WTC11 (cell line): ENCODE measurements at regions of chr10 and their contacts with region 1.

Region 1: GRCh38 chr10:102596506-102596971 is 47.7 kb upstream of the TRIM8 start:
- DNase-seq: peak; percentile 72
- ATAC-seq: peak; percentile 90
- H3K4me3 Mint-ChIP-seq: no peak overlapping the region
- H3K27ac Mint-ChIP-seq: peak overlapping the region; percentile 28; the same call in 1 of the 2 replicates
- H3K4me1 Mint-ChIP-seq: peaks cover 16% of the 10 kb centered on the region
- H3K27me3 Mint-ChIP-seq: no peaks in the 10 kb centered on the region
- CTCF ChIP-seq: peak; percentile 60

Region 2: DNA sequence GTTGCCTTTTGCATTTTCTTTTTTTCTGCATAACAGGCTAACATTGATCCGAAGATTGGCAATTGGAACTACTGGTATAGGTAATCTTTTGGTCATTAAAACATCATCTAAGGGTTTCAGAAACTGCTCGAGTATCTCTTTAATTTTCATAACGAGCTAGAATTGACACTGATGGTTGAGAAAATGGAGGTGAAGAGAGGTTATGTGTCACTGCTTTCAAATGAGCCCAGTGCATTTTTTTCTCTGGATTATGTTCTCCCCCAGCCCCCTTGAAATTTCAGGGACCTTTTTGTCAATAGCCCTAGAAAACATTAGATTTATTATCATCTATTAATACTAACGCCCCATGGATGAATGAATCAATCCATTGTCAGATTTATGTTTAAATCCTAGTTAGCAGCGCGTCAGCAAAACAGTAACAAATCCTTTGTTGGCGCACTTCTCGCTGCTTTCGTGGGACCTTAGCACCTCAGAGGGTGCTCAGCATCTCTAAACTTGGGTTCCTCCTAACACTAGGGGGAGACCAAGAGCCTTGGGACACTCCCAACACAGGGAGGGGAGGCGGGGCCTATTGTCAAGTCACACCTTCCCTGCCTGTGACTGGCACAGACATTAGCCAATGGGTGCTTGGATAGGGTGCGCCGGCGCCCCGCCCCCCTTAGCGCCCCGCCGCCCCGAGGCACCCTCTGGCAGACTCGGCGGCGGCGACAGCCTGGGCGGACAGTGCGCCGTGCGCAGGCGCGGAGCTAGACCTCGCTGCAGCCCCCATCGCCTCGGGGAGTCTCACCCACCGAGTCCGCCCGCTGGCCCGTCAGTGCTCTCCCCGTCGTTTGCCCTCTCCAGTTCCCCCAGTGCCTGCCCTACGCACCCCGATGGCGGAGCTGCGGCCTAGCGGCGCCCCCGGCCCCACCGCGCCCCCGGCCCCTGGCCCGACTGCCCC is 93.0 kb before region 1 on chr10 and contains the start of gene SUFU:
- CTCF ChIA-PET with region 1: interaction called, 23 read pairs
- POLR2A ChIA-PET with region 1: no interaction called
- DNase-seq: peak; percentile 98
- ATAC-seq: peak; percentile 74
- H3K4me3 Mint-ChIP-seq: peak within 1 kb of the TSS; percentile 95
- H3K27ac Mint-ChIP-seq: peak within 1 kb of the TSS; percentile 41; the same call in 1 of the 2 replicates
- H3K4me1 Mint-ChIP-seq: peaks cover 8% of the 10 kb centered on the region; the same call in 1 of the 2 replicates
- H3K27me3 Mint-ChIP-seq: peaks cover 12% of the 10 kb centered on the region
- CTCF ChIP-seq: peak; percentile 70
- total RNA-seq, gene SUFU: 11.6 to 13.1 TPM (median 12.8 TPM) in 3 replicates

Region 3: DNA sequence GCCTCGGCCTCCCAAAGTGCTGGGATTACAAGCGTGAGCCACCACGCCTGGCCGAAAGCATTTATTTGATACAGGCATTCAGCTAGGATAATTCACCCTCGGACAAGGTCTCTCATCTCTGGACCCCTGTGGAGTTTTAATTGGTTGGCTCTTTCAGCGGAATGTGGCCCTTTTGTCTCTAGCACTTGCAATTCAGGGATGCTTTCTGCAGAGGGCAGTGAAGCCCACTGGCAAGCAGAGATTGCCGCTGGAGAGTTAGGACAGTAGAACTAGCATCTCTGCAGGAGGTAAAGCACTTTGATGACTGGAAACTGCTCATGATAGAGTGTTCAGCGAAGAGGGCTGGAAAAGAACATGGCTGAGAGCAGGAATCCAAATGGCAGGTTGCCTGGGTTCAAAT is 30.7 kb before region 1 on chr10:
- CTCF ChIA-PET with region 1: interaction called, 12 read pairs
- POLR2A ChIA-PET with region 1: no interaction called
- DNase-seq: peak; percentile 79
- ATAC-seq: peak; percentile 94
- H3K4me3 Mint-ChIP-seq: no peak overlapping the region
- H3K27ac Mint-ChIP-seq: no peak overlapping the region
- H3K4me1 Mint-ChIP-seq: peaks cover 4% of the 10 kb centered on the region
- H3K27me3 Mint-ChIP-seq: peaks cover 94% of the 10 kb centered on the region
- CTCF ChIP-seq: 0 out of 2 replicates have a peak, but pooled peaks have one; percentile 12

Region 4: DNA sequence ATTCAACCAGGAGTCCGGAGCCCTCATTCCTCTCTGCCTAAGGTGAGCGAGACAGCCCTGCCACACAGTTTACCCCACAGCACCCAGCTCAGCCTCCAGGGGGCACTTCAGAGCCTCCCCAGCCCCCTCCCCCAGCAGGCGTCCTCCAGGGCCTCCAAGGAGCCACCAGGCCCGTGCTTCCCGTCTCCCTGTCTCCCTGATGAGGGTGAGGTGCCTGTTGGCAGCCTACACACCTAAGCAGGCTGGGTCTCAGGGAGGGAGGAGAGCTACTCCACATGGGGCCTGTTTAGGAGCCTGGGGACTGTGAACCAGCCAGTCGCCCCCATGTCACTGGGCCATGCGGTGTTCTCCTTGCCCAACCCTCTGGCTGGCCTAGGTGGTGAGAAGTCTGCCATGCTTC is 18.8 kb after region 1 on chr10:
- CTCF ChIA-PET with region 1: interaction called, 16 read pairs
- POLR2A ChIA-PET with region 1: no interaction called
- DNase-seq: peak; percentile 77
- ATAC-seq: peak; percentile 86
- H3K4me3 Mint-ChIP-seq: no peak overlapping the region
- H3K27ac Mint-ChIP-seq: no peak overlapping the region
- H3K4me1 Mint-ChIP-seq: peaks cover 8% of the 10 kb centered on the region
- H3K27me3 Mint-ChIP-seq: no peaks in the 10 kb centered on the region
- CTCF ChIP-seq: peak; percentile 43

Region 5: GRCh38 chr10:102629661-102630614 is 33.4 kb after region 1 on chr10:
- CTCF ChIA-PET with region 1: interaction called, 13 read pairs
- POLR2A ChIA-PET with region 1: no interaction called
- DNase-seq: peak; percentile 67
- ATAC-seq: peak; percentile 74
- H3K4me3 Mint-ChIP-seq: no peak overlapping the region; the same call in 1 of the 2 replicates
- H3K27ac Mint-ChIP-seq: peak overlapping the region; percentile 90
- H3K4me1 Mint-ChIP-seq: peaks cover 85% of the 10 kb centered on the region
- H3K27me3 Mint-ChIP-seq: no peaks in the 10 kb centered on the region; the same call in 1 of the 2 replicates
- CTCF ChIP-seq: no peak

Region 6: DNA sequence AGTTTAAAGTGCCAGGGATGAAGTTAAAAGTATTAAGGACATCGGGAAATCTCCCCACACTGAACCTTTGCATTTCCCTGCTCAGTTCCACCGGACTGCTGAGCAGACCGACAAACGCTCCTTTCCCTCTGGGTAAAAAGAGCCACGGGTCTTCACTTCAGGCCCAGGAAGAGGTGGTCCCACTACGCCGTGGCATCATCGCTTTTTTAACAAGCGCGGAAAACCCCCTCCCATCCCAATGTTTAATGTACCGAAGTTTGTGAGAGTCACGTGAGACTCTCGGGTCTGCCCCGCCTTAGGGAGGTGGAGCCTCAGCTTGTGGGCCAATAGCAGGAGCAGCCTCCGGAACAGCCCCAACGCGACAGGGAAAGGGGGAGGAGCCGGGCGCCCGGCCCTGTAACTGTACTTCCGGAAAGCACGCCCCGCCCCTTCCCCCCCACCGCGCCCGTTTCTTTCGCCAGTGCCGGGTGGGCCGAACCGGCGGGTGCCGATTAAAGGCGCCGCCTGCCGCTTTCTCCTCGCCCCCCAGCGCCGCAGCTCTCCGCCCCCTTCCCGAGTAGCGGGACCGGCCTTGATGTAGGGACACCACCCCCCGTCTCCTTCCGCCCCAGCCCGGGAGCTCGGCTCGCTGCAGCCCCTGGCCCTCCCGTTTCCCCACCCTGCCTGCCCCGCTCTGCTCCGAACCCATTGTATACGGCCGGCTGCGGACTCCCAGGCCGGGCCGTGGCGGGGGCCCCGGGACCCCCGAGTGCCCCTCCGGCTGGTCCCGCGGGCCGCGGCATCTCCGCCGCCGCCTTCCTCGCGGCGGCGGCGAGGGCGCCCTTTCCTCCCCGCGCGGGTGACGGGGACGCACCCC is 45.6 kb after region 1 on chr10:
- CTCF ChIA-PET with region 1: interaction called, 11 read pairs
- POLR2A ChIA-PET with region 1: no interaction called
- DNase-seq: peak; percentile 99
- ATAC-seq: peak; percentile 86
- H3K4me3 Mint-ChIP-seq: peak overlapping the region; percentile 85
- H3K27ac Mint-ChIP-seq: peak overlapping the region; percentile 99
- H3K4me1 Mint-ChIP-seq: peaks cover 21% of the 10 kb centered on the region
- H3K27me3 Mint-ChIP-seq: peaks cover 4% of the 10 kb centered on the region; the same call in 1 of the 2 replicates
- CTCF ChIP-seq: no peak

Region 7: GRCh38 chr10:102815790-102816549 is 219.4 kb after region 1 on chr10:
- CTCF ChIA-PET with region 1: no interaction called
- POLR2A ChIA-PET with region 1: no interaction called
- DNase-seq: no peak
- ATAC-seq: peak; percentile 60
- H3K4me3 Mint-ChIP-seq: no peak overlapping the region
- H3K27ac Mint-ChIP-seq: peak overlapping the region; percentile 89
- H3K4me1 Mint-ChIP-seq: peaks cover 16% of the 10 kb centered on the region
- H3K27me3 Mint-ChIP-seq: no peaks in the 10 kb centered on the region
- CTCF ChIP-seq: no peak